ENCODE measurements at regions of chr4 and their contacts with region 1.

Region 1: DNA sequence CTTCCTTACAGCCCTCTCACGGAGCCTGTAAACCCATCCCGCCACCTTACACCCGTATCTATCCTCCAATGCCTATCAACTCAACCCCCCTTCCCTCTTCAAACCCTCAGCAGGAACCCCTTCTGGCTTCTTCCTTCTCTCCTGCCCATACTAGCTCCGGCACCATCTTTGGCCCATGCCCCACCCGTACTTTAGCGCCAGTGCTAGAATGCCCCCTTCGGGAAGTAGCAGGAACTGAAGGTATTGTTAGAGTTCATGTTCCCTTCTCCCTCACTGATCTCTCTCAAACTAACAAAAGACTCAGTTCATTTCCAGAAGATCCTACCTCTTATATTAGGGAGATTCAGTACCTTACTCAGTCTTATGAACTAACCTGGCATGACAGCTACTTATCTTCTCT is 2.7 kb upstream of the UGT2B15 start:
- DNase-seq: no peak
- H3K4me3 ChIP-seq: no peak overlapping the region
- H3K27ac ChIP-seq: no peak overlapping the region
- H3K4me1 ChIP-seq: no peaks in the 10 kb centered on the region
- H3K27me3 ChIP-seq: no peaks in the 10 kb centered on the region
- CTCF ChIP-seq: peak in 1 of 3 experiments; percentile 35; a peak in 1 of 4 replicates
- EP300 ChIP-seq: no peak
- POLR2A ChIP-seq: no peak
- RAD21 ChIP-seq: peak; percentile 38 to 52

Region 2: DNA sequence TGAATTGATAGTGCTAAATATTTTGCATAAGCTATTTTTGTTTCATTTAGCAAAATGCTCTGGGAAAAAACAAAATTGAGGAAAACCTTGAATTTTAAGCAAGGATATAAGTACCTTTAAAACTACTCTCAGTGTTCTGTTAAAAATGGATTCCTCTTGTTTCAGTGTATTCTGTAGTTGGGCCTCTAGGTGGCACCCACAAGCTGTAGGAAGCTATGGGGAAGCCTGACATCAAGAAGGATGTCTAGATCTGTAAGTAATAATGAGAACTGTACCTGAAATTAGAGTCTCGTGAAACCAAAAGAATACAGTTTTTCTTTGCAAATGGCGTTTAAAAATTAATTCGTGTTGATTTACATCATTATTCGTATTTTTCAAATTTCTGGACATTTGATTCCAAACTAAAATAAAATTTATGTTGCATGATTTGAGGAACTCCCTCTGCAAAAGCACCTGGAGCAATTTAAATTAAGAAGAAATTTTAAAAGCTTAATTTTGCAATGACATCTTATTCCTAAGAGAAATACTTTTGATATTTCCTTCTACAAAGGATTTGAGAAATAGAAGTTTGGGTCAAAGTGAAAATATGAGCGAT is 174.6 kb before region 1 on chr4:
- CTCF ChIA-PET with region 1: interaction called, 16 read pairs
- POLR2A ChIA-PET with region 1: no interaction called
- DNase-seq: peak; percentile 10 to 65
- H3K4me3 ChIP-seq: no peak overlapping the region
- H3K27ac ChIP-seq: no peak overlapping the region
- H3K4me1 ChIP-seq: peaks cover 0 to 4% (median 0%) of the 10 kb centered on the region in 4 experiments; a peak in 1 of 7 replicates
- H3K27me3 ChIP-seq: peaks cover 0 to 1% (median 0%) of the 10 kb centered on the region in 4 experiments; a peak in 1 of 7 replicates
- CTCF ChIP-seq: peak in 2 of 3 experiments; percentile 76 to 78; a peak in 3 of 4 replicates
- EP300 ChIP-seq: no peak
- POLR2A ChIP-seq: no peak
- RAD21 ChIP-seq: peak; percentile 97 to 99